ENCODE measurements at regions of chr2 and their contacts with region 1.

Region 1: GRCh38 chr2:208040199-208041171 is 15.2 kb upstream of the PLEKHM3 start:
- DNase-seq: peak; percentile 63
- H3K4me3 ChIP-seq: no peak overlapping the region
- H3K27ac ChIP-seq: no peak overlapping the region
- H3K4me1 ChIP-seq: no peaks in the 10 kb centered on the region
- H3K27me3 ChIP-seq: peaks cover 0 to 3% of the 10 kb centered on the region in 2 experiments
- CTCF ChIP-seq: peak; percentile 74 to 84
- POLR2A ChIP-seq: no peak

Region 2: DNA sequence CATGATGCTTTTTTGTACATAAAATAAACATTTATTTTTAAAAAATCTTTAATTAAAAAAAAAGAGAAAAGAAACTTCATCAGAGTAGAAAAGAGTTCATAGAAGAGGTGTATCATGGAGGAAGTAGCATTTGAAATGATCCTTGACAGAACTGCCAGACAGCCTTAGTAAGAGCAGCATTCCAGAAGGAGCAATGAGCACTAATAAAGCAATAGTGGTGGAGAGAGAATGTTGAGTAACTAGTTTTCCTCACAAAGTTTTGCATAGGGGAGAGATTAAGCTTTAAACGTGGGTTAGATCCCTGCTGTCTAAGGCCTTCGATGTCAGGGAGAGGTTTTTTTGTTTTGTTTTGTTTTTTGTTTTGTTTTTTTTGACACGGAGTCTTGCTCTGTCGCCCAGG is 385.5 kb before region 1 on chr2:
- CTCF ChIA-PET with region 1: no interaction called
- POLR2A ChIA-PET with region 1: no interaction called
- dilution Hi-C with region 1: no loop called
- intact Hi-C with region 1: no loop called
- DNase-seq: no peak
- H3K4me3 ChIP-seq: no peak overlapping the region
- H3K27ac ChIP-seq: no peak overlapping the region
- H3K4me1 ChIP-seq: no peaks in the 10 kb centered on the region
- H3K27me3 ChIP-seq: no peaks in the 10 kb centered on the region
- CTCF ChIP-seq: no peak
- POLR2A ChIP-seq: no peak

Region 3: GRCh38 chr2:207746131-207746530 is 294.4 kb before region 1 on chr2:
- CTCF ChIA-PET with region 1: interaction called, 217 read pairs
- POLR2A ChIA-PET with region 1: no interaction called
- dilution Hi-C with region 1: no loop called
- intact Hi-C with region 1: loop called (anchors 1 kb)
- DNase-seq: peak; percentile 65
- H3K4me3 ChIP-seq: no peak overlapping the region
- H3K27ac ChIP-seq: no peak overlapping the region
- H3K4me1 ChIP-seq: no peaks in the 10 kb centered on the region
- H3K27me3 ChIP-seq: no peaks in the 10 kb centered on the region
- CTCF ChIP-seq: peak; percentile 83 to 87
- POLR2A ChIP-seq: no peak

Region 4: GRCh38 chr2:207847807-207848544 is 192.5 kb before region 1 on chr2:
- CTCF ChIA-PET with region 1: interaction called, 12 read pairs
- POLR2A ChIA-PET with region 1: no interaction called
- dilution Hi-C with region 1: no loop called
- intact Hi-C with region 1: no loop called
- DNase-seq: peak; percentile 97
- H3K4me3 ChIP-seq: no peak overlapping the region
- H3K27ac ChIP-seq: peak overlapping the region; percentile 47
- H3K4me1 ChIP-seq: peaks cover 18% of the 10 kb centered on the region
- H3K27me3 ChIP-seq: no peaks in the 10 kb centered on the region
- CTCF ChIP-seq: no peak
- POLR2A ChIP-seq: peak; percentile 61

Region 5: GRCh38 chr2:207974216-207974605 is 66.3 kb before region 1 on chr2:
- CTCF ChIA-PET with region 1: interaction called, 19 read pairs
- POLR2A ChIA-PET with region 1: no interaction called
- dilution Hi-C with region 1: no loop called
- intact Hi-C with region 1: no loop called
- DNase-seq: no peak
- H3K4me3 ChIP-seq: no peak overlapping the region
- H3K27ac ChIP-seq: no peak overlapping the region
- H3K4me1 ChIP-seq: no peaks in the 10 kb centered on the region
- H3K27me3 ChIP-seq: no peaks in the 10 kb centered on the region
- CTCF ChIP-seq: no peak
- POLR2A ChIP-seq: no peak

Region 6: DNA sequence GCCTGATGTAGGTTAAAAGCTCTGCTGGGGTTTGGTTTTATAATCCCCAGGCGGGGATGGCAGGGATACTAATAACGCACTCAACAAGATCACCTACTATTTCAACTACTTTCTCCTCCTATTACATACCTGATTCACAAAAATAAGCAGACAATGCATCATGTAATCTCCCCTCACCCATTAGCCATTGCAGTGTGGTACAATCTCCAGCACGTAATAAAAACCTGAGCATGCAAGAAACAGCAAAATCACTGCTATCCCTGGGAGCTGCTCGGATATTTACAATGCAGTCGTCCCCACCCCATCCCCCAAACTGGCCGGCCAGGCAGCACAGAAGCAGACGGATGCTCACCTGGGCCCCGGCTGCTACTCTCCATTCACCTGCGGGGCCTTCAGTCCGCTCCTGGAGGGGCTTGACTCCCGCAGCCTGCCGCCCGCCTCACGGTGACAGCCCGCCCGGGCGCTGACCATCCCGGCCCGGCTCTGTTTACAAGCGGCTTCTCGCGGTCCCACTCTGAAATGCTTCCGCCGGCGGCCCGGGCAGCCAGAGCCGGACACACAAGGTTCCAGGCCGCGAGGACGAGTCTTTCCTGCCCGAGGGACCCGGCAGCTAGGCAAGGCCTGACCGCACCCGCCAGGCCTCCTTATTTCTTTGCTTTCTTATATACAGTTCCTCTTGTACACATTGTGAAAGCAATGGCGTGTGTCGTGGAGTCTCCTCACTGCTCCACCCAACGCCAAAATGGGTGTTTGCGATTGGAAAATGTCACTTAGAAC is 15.3 kb before region 1 on chr2 and contains the start of gene PLEKHM3:
- CTCF ChIA-PET with region 1: interaction called, 21 read pairs
- POLR2A ChIA-PET with region 1: interaction called, 4 read pairs
- dilution Hi-C with region 1: no loop called
- intact Hi-C with region 1: no loop called
- DNase-seq: peak; percentile 87
- H3K4me3 ChIP-seq: peak within 1 kb of the TSS; percentile 74 to 96 (median 94)
- H3K27ac ChIP-seq: peak within 1 kb of the TSS; percentile 45
- H3K4me1 ChIP-seq: peaks cover 12% of the 10 kb centered on the region
- H3K27me3 ChIP-seq: peaks cover 0 to 1% of the 10 kb centered on the region in 2 experiments
- CTCF ChIP-seq: no peak
- POLR2A ChIP-seq: peak; percentile 82
- total RNA-seq, gene PLEKHM3: 8.5 and 9.1 TPM in 2 replicates